Heart left ventricle (tissue), 16 donors: ENCODE measurements at regions of chr9 and their contacts with region 1.

Region 1: DNA sequence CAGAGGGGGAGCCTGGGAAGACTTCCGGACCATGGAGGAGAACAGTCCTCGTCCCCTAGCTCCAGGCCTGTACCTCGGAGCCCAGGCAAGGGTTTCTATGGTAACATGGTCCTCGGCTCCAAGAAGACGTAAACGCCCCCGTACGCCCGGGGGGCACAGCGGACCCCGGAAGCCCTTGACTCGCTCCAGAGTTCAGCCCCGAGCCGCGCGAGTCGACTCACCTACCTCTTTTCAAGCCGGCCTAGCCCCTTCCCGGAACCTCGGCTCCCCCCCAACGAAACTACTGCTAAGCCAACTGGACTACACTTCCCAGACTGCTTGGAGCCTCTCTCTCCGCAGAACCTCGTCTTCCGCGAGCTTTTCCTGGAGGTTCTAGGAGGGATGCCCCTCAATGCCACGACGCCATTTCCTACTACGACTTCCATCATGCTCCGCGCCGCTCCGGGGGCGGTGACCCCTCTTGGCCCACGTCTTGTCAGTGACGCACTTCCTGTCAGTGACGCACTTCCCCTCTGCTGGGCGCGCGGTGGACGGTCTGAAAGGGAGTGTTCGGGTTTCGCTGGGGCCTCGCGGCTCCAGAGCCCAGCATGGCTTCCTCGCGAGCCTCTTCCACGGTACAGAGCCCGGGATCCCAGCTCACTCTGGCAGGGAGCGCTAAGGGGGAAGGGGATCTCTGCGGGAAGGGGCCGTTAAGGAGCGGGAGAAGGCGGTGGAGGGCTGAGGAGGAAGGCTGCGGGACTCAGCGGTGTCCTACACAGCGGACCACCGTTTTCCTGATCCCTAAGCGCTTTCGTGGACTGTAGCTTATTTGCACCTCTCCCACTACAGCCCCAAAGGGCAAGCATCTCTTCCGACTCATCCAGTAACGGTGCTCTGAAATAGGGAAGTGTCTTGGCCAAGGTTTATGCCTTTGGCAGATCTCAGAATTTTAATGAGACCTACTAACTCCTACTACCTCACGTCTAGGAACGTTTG is at the starts of genes CDC26 and PRPF4:
- DNase-seq: peak; percentile 97 to 98 (median 97)
- ATAC-seq: peak; percentile 98 to 99 (median 98)
- H3K4me3 ChIP-seq: peak within 1 kb of the TSS; percentile 48 to 93 (median 76)
- H3K27ac ChIP-seq: peak within 1 kb of the TSS; percentile 69 to 96 (median 94)
- H3K4me1 ChIP-seq: peaks cover 4 to 41% (median 19%) of the 10 kb centered on the region in 12 donors
- H3K27me3 ChIP-seq: no peaks in the 10 kb centered on the region
- CTCF ChIP-seq: peak in 1 of 12 donors; percentile 5
- POLR2A ChIP-seq: peak; percentile 60 to 87
- total RNA-seq, gene CDC26: 22.3 to 39.4 (median 34.4) TPM
- total RNA-seq, gene PRPF4: 10.4 to 15.0 (median 13.8) TPM

Region 2: GRCh38 chr9:113187935-113188595 is 87.4 kb before region 1 on chr9:
- intact Hi-C with region 1: loop called in 1 of 10 experiments (anchors 10 kb)
- DNase-seq: peak; percentile 26 to 70 (median 41)
- ATAC-seq: peak; percentile 78 to 96 (median 95)
- H3K4me3 ChIP-seq: peak overlapping the region in 2 of 12 donors; percentile 6 to 37
- H3K27ac ChIP-seq: peak overlapping the region in 10 of 12 donors; percentile 14 to 89 (median 44)
- H3K4me1 ChIP-seq: peaks cover 0 to 36% (median 0%) of the 10 kb centered on the region in 12 donors
- H3K27me3 ChIP-seq: no peaks in the 10 kb centered on the region
- CTCF ChIP-seq: no peak
- POLR2A ChIP-seq: peak in 1 of 2 donors; percentile 39

Region 3: DNA sequence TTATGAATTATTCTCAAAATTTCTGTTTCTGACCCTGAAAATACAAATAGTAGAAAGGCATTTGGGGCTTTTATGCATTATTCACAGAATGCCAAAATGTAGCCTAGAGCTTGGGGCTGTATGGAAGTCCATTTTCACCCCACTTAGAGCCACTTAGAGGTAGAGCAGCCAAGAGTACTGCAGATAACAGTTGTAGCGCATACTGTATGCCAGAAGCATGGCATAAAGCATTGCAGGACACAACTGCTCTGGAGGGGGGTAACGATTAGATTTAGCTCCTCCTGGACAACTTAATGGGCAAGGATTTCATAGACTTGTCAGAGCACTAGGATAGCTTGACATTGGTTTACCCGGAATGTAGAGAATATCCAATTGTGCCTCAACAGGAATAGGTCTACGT is 38.4 kb before region 1 on chr9:
- intact Hi-C with region 1: no loop called
- DNase-seq: no peak
- ATAC-seq: peak; percentile 81 to 91 (median 89)
- H3K4me3 ChIP-seq: no peak overlapping the region
- H3K27ac ChIP-seq: peak overlapping the region in 1 of 12 donors; percentile 23
- H3K4me1 ChIP-seq: peaks cover 0 to 50% (median 19%) of the 10 kb centered on the region in 12 donors
- H3K27me3 ChIP-seq: no peaks in the 10 kb centered on the region
- CTCF ChIP-seq: no peak
- POLR2A ChIP-seq: no peak

Region 4: DNA sequence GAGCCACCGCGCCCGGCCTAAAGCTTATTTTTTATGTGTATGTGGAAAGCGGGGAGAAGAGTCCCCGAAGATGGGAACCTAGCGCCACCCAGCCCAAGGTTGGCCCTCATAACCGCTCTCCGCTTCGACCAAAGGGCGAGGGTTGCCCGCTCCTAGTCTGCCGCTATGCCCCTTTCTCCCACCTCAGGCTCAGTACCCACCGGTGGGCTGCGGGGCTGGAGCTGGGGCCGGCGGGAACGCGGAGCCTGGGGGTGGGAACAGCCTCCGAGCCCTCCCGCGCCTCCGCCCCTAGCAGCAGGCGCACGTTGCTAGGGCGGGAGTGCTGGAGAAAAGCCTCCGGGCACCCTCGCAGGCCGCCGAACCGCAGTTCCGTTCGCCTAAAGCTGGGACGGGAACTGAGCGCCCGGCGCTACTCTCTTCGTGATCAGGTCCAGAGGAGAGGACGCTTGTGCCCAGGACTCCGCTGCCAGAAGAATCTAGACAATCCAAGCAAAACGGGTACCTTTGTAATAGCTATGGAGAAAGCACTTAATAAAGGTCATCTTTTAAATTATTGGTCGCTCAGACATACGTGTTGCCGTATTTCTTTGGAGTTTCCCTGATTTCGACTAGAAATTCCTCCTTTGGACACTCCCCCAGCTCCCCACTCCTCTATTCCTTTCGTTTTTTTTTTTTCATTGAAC is 64.7 kb after region 1 on chr9 and contains the start of gene WDR31:
- intact Hi-C with region 1: loop called in 1 of 10 experiments (anchors 10 kb)
- DNase-seq: peak; percentile 87 to 93 (median 89)
- ATAC-seq: peak; percentile 72 to 91 (median 90)
- H3K4me3 ChIP-seq: peak within 1 kb of the TSS; percentile 43 to 99 (median 80)
- H3K27ac ChIP-seq: peak within 1 kb of the TSS; percentile 37 to 90 (median 80)
- H3K4me1 ChIP-seq: peaks cover 0 to 26% (median 12%) of the 10 kb centered on the region in 12 donors
- H3K27me3 ChIP-seq: no peaks in the 10 kb centered on the region
- CTCF ChIP-seq: peak in 1 of 12 donors; percentile 31
- POLR2A ChIP-seq: peak in 1 of 2 donors; percentile 52
- total RNA-seq, gene WDR31: 8.1 to 22.4 (median 14.4) TPM

Region 5: DNA sequence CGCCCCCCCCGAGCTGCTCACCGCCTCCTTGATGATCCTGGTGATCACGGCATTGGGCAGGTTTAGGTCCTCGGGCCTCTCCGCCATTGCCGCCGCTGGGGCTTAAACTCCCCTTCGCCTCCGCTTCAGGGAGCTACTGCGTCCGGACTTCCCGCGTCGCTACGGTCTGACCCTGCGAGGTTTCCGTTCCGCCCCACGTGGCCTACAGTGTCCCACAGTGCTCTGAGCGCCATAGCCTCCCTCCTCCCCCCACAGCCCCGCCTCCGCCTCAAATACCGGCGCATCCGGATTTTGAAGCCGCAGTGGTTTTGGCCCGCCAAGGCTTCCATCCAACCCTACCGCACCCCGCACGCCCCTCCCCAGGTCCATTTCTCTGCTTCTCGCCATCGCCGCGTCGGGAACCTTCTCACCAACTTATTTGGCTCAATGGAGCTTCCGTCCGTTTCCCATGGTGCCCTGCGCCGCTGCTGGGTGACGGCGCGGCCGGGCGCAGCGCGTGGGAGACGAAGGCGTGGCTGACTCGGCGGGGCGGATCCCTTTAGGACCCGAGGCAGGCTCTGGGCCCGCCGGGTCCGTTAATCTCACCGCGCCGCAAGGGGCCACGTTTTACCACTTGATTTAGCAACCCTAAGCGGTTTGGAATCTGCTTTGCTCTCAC is 134.9 kb after region 1 on chr9 and contains the starts of genes C9orf43 and POLE3:
- intact Hi-C with region 1: loop called in 6 of 10 experiments (anchors 2 to 10 kb)
- DNase-seq: peak; percentile 95 to 97 (median 96)
- ATAC-seq: peak; percentile 97 to 99 (median 98)
- H3K4me3 ChIP-seq: peak within 1 kb of the TSS; percentile 61 to 97 (median 80)
- H3K27ac ChIP-seq: peak within 1 kb of the TSS; percentile 85 to 99 (median 97)
- H3K4me1 ChIP-seq: peaks cover 0 to 25% (median 12%) of the 10 kb centered on the region in 12 donors
- H3K27me3 ChIP-seq: no peaks in the 10 kb centered on the region
- CTCF ChIP-seq: no peak
- POLR2A ChIP-seq: peak in 1 of 2 donors; percentile 66
- total RNA-seq, gene C9orf43: 0.14 to 0.93 (median 0.49) TPM in 4 of 9 donors, not detected in the others
- total RNA-seq, gene POLE3: 18.7 to 31.2 (median 24.3) TPM

Region 6: GRCh38 chr9:113591001-113591898 is 315.8 kb after region 1 on chr9:
- intact Hi-C with region 1: loop called in 4 of 10 experiments (anchors 10 kb)
- DNase-seq: peak; percentile 82 to 90 (median 85)
- ATAC-seq: peak in 3 of 4 donors; percentile 5 to 18 (median 12)
- H3K4me3 ChIP-seq: no peak overlapping the region
- H3K27ac ChIP-seq: peak overlapping the region; percentile 13 to 97 (median 76)
- H3K4me1 ChIP-seq: peaks cover 7 to 89% (median 76%) of the 10 kb centered on the region in 12 donors
- H3K27me3 ChIP-seq: no peaks in the 10 kb centered on the region
- CTCF ChIP-seq: peak; percentile 86 to 98 (median 94)
- POLR2A ChIP-seq: no peak

Region 7: DNA sequence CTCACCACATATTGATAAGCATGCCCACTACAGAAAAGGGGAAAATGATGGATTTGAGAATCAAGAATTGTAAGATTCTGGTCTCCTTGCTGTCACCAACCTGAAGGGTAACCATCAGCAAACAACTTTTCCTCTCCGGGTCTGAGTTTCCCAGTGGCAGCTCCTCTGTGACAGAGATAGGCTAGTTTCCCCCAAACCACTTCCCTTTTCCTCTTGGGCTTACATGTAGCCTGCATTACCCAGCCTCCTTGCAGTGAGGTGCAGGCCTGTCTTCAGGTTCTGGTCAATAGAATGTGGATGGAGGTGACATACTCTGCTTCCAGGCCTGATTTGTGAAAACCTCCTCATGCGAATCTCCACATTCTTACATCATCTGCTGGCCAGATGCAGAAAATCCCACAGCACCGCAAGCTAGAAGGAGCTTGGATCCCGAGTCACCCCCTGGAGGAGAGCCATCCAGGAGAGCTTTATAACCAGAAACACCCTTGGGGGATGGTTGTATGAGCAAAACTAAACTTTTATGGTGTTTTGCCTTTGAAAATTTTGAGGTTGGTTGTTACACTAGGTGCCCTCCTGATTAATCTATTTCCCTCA is 394.2 kb after region 1 on chr9:
- intact Hi-C with region 1: loop called in 1 of 10 experiments (anchors 10 kb)
- DNase-seq: no peak
- ATAC-seq: no peak
- H3K4me3 ChIP-seq: no peak overlapping the region
- H3K27ac ChIP-seq: no peak overlapping the region
- H3K4me1 ChIP-seq: peaks cover 0 to 6% (median 0%) of the 10 kb centered on the region in 12 donors
- H3K27me3 ChIP-seq: no peaks in the 10 kb centered on the region
- CTCF ChIP-seq: no peak
- POLR2A ChIP-seq: no peak